Psoas muscle (tissue), 8 donors: ENCODE measurements at regions of chr2 and their contacts with region 1.

Region 1: DNA sequence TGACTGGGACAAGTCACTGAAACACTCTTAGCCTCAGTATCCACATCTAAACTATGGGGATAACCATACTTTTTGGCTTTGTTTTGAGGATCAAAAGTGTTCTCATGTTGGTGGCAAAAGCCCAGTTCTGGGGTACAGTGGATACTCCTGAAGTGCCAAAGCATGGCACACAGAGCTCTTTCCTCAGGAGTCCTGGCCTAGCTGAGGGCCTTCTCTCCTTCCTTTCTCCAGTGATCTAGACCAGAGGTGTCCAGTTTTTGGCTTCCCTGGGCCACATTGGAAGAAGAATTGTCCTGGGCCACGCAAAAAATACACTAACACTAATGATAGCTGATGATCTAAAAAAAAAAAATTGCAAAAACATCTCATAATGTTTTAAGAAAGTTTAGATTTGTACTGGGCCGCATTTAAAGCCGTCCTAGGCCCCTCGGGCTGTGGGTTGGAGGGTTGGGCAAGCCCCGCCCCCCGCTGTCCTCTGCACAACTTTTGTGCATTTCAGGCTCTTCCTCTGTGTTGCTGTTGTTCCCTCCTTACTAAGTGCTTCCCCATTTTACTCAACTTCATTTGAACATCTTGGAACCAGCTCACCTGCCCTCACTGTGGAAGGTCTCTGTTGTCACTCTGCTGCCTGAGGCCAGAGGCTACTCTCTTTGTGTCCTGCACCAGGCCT is 337.0 kb downstream of the CYRIA start:
- DNase-seq: no peak
- ATAC-seq: no peak
- H3K4me3 ChIP-seq: no peak overlapping the region
- H3K27ac ChIP-seq: no peak overlapping the region
- H3K4me1 ChIP-seq: no peaks in the 10 kb centered on the region
- H3K27me3 ChIP-seq: peaks cover 0 to 2% (median 0%) of the 10 kb centered on the region in 3 donors
- CTCF ChIP-seq: no peak

Region 2: DNA sequence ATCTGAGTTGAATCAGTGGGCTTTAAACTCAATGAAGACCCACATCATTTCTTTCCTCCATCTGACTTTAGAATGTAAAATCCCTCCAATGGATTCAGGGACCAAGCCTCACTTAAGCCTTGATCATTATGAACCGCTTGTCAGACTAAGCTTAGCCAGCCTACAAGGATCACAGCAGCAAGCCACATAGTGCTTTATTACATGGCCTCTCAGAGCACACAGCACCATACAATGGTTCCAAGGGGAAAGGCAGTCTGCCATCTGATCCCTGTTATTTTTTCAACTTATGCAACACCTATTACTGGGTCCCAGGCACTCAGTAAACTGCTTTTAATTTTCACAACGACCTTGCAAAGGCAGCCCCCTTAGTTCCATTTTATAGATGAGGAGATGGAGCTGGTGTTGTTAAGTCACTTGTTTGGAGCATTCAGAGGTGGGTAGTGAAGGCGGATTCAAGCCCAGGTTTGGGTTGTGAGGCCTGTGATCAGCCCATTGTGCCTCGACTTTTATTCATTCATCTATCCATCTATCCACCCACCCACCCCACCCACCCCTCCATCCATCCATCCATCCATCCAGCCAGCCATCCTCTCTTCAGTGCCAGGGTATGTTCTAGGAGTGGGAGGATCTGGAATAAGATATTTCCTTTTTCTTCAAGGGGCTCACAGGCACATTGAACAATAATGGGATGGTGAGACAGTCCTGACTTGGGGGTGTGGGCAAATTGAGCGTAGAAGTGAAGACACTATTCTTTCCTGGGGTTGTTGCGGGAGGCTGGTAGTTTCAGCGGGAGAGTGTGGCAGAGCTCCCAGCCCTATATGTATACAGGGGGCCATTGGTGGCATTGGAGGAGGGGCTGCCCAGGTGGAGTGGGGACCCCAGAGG is 247.1 kb before region 1 on chr2:
- intact Hi-C with region 1: no loop called
- DNase-seq: no peak
- ATAC-seq: no peak
- H3K4me3 ChIP-seq: no peak overlapping the region
- H3K27ac ChIP-seq: no peak overlapping the region
- H3K4me1 ChIP-seq: no peaks in the 10 kb centered on the region
- H3K27me3 ChIP-seq: no peaks in the 10 kb centered on the region
- CTCF ChIP-seq: no peak

Region 3: DNA sequence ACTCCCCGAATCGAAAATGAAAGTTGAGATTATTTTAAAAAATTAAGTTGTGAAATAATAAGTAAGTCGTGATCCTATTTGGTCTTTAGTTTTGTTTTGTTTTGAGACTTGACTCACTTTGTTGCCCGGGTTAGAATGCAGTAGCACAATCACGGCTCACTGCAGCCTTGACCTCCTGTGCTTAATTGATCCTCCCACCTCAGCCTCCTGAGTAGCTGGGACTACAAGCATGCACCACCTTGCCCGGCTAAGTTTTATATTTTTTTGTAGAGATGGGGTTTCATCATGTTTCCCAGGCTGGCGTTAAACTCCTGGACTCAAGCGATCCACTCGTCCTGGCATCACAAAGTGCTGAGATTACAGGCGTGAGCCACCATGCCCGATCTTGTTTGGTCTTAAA is 62.1 kb before region 1 on chr2:
- intact Hi-C with region 1: loop called in 1 of 2 experiments (anchors 2 kb)
- DNase-seq: no peak
- ATAC-seq: no peak
- H3K4me3 ChIP-seq: no peak overlapping the region
- H3K27ac ChIP-seq: no peak overlapping the region
- H3K4me1 ChIP-seq: no peaks in the 10 kb centered on the region
- H3K27me3 ChIP-seq: no peaks in the 10 kb centered on the region
- CTCF ChIP-seq: no peak

Region 4: DNA sequence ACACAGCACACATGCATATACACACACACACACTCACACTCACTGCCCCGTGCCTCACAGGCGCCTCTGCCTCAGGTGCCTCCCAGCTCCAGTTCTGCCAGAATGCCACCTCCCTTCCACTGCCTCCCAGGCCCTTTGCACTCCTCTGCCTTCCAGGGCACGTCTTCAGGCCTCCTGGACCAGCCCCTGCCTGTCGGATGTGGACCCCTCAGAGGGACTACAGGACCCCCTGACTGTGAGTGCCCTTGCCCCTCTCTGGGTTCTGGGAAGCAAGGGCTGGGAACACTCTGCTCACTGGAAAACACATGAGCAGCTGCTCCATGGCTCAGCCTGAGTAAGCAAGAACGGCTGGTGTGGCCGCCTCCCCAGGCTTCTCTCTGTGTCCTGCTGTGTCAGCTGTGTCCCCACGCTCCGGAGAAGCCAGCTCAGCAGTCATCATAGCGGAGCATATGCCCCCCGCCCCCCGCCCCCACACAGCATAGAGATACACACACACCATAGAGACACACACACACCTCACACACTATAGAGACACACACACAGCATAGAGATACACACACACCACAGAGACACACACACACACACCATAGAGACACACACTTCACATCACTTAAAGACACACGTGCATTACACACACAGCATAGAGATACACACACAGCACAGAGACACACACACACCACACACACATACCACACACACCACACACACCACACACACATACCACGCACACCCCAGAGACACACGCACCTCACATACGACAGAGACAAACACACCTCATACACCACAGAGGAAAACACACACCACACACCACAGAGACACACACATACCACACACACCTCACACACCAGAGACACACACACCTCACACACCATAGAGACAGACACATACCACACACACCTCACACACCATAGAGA is 65.7 kb after region 1 on chr2:
- intact Hi-C with region 1: no loop called
- DNase-seq: peak in 1 of 2 donors; percentile 50
- ATAC-seq: peak in 2 of 4 donors; percentile 46 to 79
- H3K4me3 ChIP-seq: no peak overlapping the region
- H3K27ac ChIP-seq: no peak overlapping the region
- H3K4me1 ChIP-seq: no peaks in the 10 kb centered on the region
- H3K27me3 ChIP-seq: no peaks in the 10 kb centered on the region
- CTCF ChIP-seq: no peak

Region 5: DNA sequence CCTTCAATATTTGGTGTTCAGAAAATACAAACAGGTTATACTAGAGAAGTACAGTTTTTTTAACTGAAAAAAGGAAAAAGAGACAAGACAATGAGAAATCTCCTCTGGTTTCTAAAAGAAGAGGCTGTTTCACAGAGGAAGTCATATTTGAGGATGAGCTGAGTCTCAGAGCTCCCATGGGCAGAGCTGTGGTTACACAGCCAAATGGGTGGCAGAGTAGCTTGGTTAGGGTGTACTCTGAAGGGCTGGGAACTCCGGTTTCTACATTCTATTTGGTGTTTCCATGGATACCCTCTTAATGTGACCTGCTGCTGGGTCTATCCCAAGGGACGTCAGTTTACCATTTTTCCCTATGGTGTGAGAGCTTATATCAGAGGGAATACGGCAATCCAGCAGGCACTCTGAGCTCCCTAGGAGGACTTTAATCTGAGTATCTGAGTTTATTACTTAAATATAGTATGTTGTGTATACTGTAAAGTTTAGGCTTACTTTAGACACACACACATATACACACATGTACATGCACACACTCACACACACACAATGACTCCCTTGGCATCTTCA is 262.8 kb after region 1 on chr2:
- intact Hi-C with region 1: no loop called
- DNase-seq: no peak
- ATAC-seq: no peak
- H3K4me3 ChIP-seq: no peak overlapping the region
- H3K27ac ChIP-seq: no peak overlapping the region
- H3K4me1 ChIP-seq: no peaks in the 10 kb centered on the region
- H3K27me3 ChIP-seq: no peaks in the 10 kb centered on the region
- CTCF ChIP-seq: no peak